Panc1 (cell line): ENCODE measurements at regions of chr12 and their contacts with region 1.

Region 1: GRCh38 chr12:119512772-119513497 is 80.6 kb upstream of the TMEM233 start:
- DNase-seq: no peak
- ATAC-seq: no peak
- H3K4me3 ChIP-seq: no peak overlapping the region
- H3K27ac ChIP-seq: no peak overlapping the region
- H3K4me1 ChIP-seq: no peaks in the 10 kb centered on the region
- H3K27me3 ChIP-seq: 0 out of 2 replicates have a peak, but pooled peaks cover 3% of the 10 kb centered on the region
- CTCF ChIP-seq: no peak

Region 2: GRCh38 chr12:119423285-119423684 is 89.7 kb before region 1 on chr12:
- CTCF ChIA-PET with region 1: no interaction called
- POLR2A ChIA-PET with region 1: interaction called, 15 read pairs
- in situ Hi-C with region 1: no loop called
- intact Hi-C with region 1: no loop called
- DNase-seq: no peak
- ATAC-seq: no peak
- H3K4me3 ChIP-seq: no peak overlapping the region
- H3K27ac ChIP-seq: no peak overlapping the region
- H3K4me1 ChIP-seq: no peaks in the 10 kb centered on the region
- H3K27me3 ChIP-seq: peaks cover 8% of the 10 kb centered on the region
- CTCF ChIP-seq: no peak

Region 3: GRCh38 chr12:119876761-119877638 is 364.1 kb after region 1 on chr12 and contains the start of gene CIT:
- CTCF ChIA-PET with region 1: no interaction called
- POLR2A ChIA-PET with region 1: no interaction called
- in situ Hi-C with region 1: no loop called
- intact Hi-C with region 1: no loop called
- DNase-seq: peak; percentile 75
- ATAC-seq: peak; percentile 100
- H3K4me3 ChIP-seq: peak within 1 kb of the TSS; percentile 87 to 90
- H3K27ac ChIP-seq: peak within 1 kb of the TSS; percentile 91
- H3K4me1 ChIP-seq: peaks cover 10% of the 10 kb centered on the region; the same call in 1 of the 2 replicates
- H3K27me3 ChIP-seq: no peaks in the 10 kb centered on the region
- CTCF ChIP-seq: no peak
- total RNA-seq, gene CIT: 67.9 TPM